CD14-positive monocyte (primary cell): ENCODE measurements at regions of chr1 and their contacts with region 1.

Region 1: DNA sequence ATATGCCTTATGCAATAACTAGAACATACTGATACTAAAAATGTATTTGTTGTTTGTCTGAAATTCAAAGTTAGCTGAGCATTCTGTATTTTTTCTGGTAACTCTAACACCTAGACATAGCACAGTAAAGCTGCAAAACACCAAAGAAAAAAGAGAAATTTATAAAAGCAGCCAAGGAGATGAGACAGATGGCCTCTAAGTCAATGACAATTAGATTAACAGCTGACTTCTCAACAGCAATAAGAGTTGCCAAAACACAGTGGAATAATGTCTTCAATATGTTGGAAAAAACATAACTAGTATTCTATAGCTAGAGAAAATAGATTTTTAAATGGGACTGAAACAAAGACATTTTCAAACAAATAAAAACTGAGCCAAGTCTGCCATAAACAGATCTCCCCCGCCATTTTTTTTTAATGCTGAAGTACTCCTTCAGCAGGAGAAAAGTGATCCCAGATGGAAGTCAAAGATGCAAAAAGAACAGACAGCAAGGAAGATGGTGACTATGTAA is 81.3 kb downstream of the SYF2 start:
- DNase-seq: no peak
- H3K4me3 ChIP-seq: no peak overlapping the region
- H3K4me3 Mint-ChIP-seq: peak overlapping the region in 1 of 2 donors; percentile 2
- H3K27ac ChIP-seq: no peak overlapping the region
- H3K27ac Mint-ChIP-seq: peak overlapping the region in 1 of 7 donors; percentile 27
- H3K4me1 ChIP-seq: no peaks in the 10 kb centered on the region
- H3K4me1 Mint-ChIP-seq: peaks cover 9% of the 10 kb centered on the region
- H3K27me3 ChIP-seq: no peaks in the 10 kb centered on the region
- H3K27me3 Mint-ChIP-seq: peaks cover 3 to 10% (median 8%) of the 10 kb centered on the region in 3 donors
- CTCF ChIP-seq: no peak

Region 2: DNA sequence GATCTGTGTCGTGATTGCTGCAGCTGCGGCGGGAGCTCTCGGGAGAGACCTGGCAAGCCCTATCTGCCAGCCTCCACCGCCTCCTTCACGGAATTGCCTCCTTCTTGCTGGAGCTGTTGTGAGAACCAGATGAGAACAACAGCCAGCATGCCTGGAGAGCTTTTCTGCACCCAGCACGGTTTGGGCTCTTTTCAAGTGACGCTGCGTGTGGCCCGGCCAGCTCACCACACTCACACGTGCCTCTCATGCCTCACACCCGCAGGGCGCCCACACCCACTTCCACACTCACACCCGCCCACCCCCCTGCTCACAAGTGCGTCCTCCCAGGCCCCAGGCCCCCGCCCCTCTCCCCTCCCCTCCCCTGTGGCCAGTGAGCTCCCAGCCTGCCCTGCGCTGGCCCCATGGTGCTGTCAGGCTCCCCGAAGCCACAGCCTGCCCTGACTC is 85.2 kb before region 1 on chr1:
- intact Hi-C with region 1: loop called in 1 of 2 experiments (anchors 10 kb)
- DNase-seq: no peak
- H3K4me3 ChIP-seq: no peak overlapping the region
- H3K4me3 Mint-ChIP-seq: peak overlapping the region in 1 of 2 donors; percentile 12
- H3K27ac ChIP-seq: no peak overlapping the region
- H3K27ac Mint-ChIP-seq: peak overlapping the region in 2 of 7 donors; percentile 21 to 76
- H3K4me1 ChIP-seq: peaks cover 0 to 3% of the 10 kb centered on the region in 2 donors
- H3K4me1 Mint-ChIP-seq: peaks cover 22% of the 10 kb centered on the region
- H3K27me3 ChIP-seq: no peaks in the 10 kb centered on the region
- H3K27me3 Mint-ChIP-seq: peaks cover 1 to 22% (median 2%) of the 10 kb centered on the region in 3 donors
- CTCF ChIP-seq: no peak

Region 3: DNA sequence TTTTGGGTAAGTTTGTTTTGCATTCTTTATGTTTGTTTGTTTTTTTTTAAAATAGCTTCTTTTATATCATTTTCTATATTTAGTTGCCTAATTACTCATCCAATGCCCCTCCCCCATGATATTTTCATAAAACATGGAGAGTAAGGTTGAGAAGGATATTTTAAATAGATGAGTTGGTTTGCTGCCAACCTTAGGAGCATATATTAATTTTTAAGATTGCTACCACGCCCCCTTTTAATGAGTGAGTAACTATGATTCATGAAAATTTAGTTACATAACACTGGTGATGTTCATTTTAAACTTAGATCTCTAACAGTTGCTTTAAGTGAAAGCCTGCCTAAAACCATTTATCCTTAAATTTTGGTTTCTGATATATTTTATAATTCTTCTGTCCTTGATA is 205.8 kb after region 1 on chr1:
- intact Hi-C with region 1: no loop called
- DNase-seq: no peak
- H3K4me3 ChIP-seq: no peak overlapping the region
- H3K4me3 Mint-ChIP-seq: no peak overlapping the region
- H3K27ac ChIP-seq: no peak overlapping the region
- H3K27ac Mint-ChIP-seq: peak overlapping the region in 5 of 7 donors; percentile 6 to 73 (median 59)
- H3K4me1 ChIP-seq: no peaks in the 10 kb centered on the region
- H3K4me1 Mint-ChIP-seq: peaks cover 4% of the 10 kb centered on the region
- H3K27me3 ChIP-seq: no peaks in the 10 kb centered on the region
- H3K27me3 Mint-ChIP-seq: no peaks in the 10 kb centered on the region
- CTCF ChIP-seq: no peak